A549 (cell line): ENCODE measurements at regions of chr5 and their contacts with region 1.

Region 1: DNA sequence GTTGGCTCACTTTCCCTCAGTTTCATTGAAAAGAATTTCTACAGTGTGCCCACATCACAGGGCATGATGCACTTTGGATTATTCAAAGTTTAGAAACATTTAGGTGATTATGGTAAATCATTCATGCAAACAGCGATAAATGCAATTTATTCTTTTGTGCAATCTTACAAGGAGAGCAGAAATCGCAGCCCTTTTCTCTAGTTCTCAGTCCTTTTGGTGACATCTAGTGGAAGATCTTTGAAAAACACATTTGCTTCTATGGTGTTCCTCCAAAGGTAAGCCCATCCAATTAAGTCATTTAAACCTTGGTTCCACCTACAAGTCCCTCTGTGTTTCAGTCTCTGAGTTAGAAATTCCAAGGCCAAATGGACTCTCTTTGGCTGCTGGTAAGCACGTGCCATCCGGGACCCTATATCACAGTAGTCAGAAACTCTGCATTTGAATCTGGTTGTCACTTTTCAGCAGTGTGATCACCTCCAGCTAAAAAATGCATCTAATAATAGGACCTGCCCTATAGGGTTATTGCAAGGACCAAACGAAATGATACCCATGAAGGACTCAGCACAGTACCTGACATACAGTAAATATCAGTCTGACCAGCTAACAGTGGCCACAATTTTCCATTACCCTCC is 66.4 kb downstream of the MACROH2A1 start:
- DNase-seq: peak; percentile 68 to 90
- ATAC-seq: peak; percentile 49 to 61; a peak in 4 of 6 replicates
- H3K4me3 ChIP-seq: no peak overlapping the region
- H3K27ac ChIP-seq: 0 out of 6 replicates have a peak overlapping the region, but pooled peaks of 1 of the 2 experiments have one; percentile 20
- H3K4me1 ChIP-seq: no peaks in the 10 kb centered on the region
- CTCF ChIP-seq: peak; percentile 81
- EP300 ChIP-seq: no peak
- POLR2A ChIP-seq: no peak
- RAD21 ChIP-seq: peak; percentile 81 to 91

Region 2: GRCh38 chr5:134917070-134917815 is 415.4 kb before region 1 on chr5:
- CTCF ChIA-PET with region 1: interaction called, 18 read pairs
- POLR2A ChIA-PET with region 1: no interaction called
- DNase-seq: peak in 1 of 2 experiments; percentile 16
- ATAC-seq: peak in 1 of 2 experiments; percentile 74; a peak in 3 of 6 replicates
- H3K4me3 ChIP-seq: no peak overlapping the region
- H3K27ac ChIP-seq: no peak overlapping the region
- H3K4me1 ChIP-seq: no peaks in the 10 kb centered on the region
- CTCF ChIP-seq: peak; percentile 46
- EP300 ChIP-seq: no peak
- POLR2A ChIP-seq: no peak
- RAD21 ChIP-seq: peak; percentile 40 to 50; a peak in 4 of 5 replicates

Region 3: DNA sequence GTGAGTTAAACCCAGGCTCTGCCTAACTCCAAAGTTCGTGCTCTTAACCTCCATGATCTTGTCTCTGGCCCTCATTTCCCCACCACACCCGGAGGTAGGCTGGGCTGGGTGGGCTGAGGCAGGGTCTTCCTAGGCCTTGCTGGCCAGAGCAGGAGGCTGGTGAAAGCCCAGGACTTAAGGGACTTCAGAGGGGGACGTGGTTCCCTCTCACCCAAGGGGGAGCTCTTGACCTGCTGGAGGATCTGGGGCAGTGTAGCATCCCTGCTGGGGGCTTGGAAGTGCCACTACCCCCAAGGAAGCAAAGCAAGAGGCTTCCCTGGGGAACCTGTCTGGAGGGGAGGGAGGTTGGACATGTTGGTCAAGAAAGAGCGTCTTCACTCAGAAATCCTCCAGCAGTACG is 313.3 kb before region 1 on chr5:
- CTCF ChIA-PET with region 1: interaction called, 10 read pairs
- POLR2A ChIA-PET with region 1: no interaction called
- DNase-seq: no peak
- ATAC-seq: peak in 1 of 2 experiments; percentile 55; a peak in 1 of 6 replicates
- H3K4me3 ChIP-seq: no peak overlapping the region
- H3K27ac ChIP-seq: no peak overlapping the region
- H3K4me1 ChIP-seq: no peaks in the 10 kb centered on the region
- CTCF ChIP-seq: no peak
- EP300 ChIP-seq: no peak
- POLR2A ChIP-seq: no peak
- RAD21 ChIP-seq: peak; percentile 27 to 47; a peak in 3 of 5 replicates

Region 4: GRCh38 chr5:135310328-135310989 is 22.2 kb before region 1 on chr5:
- CTCF ChIA-PET with region 1: interaction called, 11 read pairs
- POLR2A ChIA-PET with region 1: no interaction called
- DNase-seq: no peak
- ATAC-seq: no peak
- H3K4me3 ChIP-seq: no peak overlapping the region
- H3K27ac ChIP-seq: peak overlapping the region in 1 of 2 experiments; percentile 83; a peak in 3 of 6 replicates
- H3K4me1 ChIP-seq: peaks cover 35% of the 10 kb centered on the region
- CTCF ChIP-seq: no peak
- EP300 ChIP-seq: peak in 1 of 2 experiments; percentile 36; a peak in 1 of 5 replicates
- POLR2A ChIP-seq: no peak
- RAD21 ChIP-seq: no peak; a peak in 1 of 5 replicates

Region 5: GRCh38 chr5:135319928-135320607 is 12.6 kb before region 1 on chr5:
- CTCF ChIA-PET with region 1: interaction called, 30 read pairs
- POLR2A ChIA-PET with region 1: no interaction called
- DNase-seq: no peak
- ATAC-seq: peak in 1 of 2 experiments; percentile 73; a peak in 3 of 6 replicates
- H3K4me3 ChIP-seq: no peak overlapping the region
- H3K27ac ChIP-seq: peak overlapping the region in 1 of 2 experiments; percentile 41; a peak in 2 of 6 replicates
- H3K4me1 ChIP-seq: no peaks in the 10 kb centered on the region
- CTCF ChIP-seq: no peak
- EP300 ChIP-seq: no peak
- POLR2A ChIP-seq: no peak
- RAD21 ChIP-seq: no peak

Region 6: GRCh38 chr5:135343413-135343812 is 10.8 kb after region 1 on chr5:
- CTCF ChIA-PET with region 1: interaction called, 34 read pairs
- POLR2A ChIA-PET with region 1: no interaction called
- DNase-seq: no peak
- ATAC-seq: no peak
- H3K4me3 ChIP-seq: no peak overlapping the region
- H3K27ac ChIP-seq: no peak overlapping the region
- H3K4me1 ChIP-seq: no peaks in the 10 kb centered on the region
- CTCF ChIP-seq: no peak
- EP300 ChIP-seq: no peak
- POLR2A ChIP-seq: no peak
- RAD21 ChIP-seq: no peak